Calu3 (cell line): ENCODE measurements at regions of chr12 and their contacts with region 1.

Region 1: DNA sequence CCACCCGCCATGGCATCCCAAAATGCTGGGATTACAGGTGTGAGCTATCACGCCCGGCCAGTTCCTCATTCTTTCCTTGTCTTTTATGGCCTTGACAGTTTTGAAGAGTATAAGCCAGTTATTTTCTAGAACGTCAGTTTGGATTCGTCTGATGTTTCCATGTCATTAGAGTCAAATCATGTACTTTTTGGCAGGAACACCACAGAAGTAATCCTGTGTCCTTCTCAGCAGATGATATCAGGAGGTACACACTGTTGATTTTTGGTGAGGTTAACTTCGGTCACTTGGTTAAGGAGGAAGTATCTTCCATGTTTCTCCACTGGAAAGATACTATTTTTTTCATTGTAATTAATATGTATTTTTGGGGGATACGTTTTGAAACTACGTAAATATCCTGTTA is 25.1 kb upstream of the VPS33A start:
- DNase-seq: no peak
- H3K4me3 Mint-ChIP-seq: no peak overlapping the region
- H3K27ac Mint-ChIP-seq: no peak overlapping the region
- H3K4me1 Mint-ChIP-seq: no peaks in the 10 kb centered on the region
- H3K27me3 Mint-ChIP-seq: no peaks in the 10 kb centered on the region
- CTCF ChIP-seq: no peak

Region 2: GRCh38 chr12:122031342-122032216 is 259.9 kb before region 1 on chr12:
- CTCF ChIA-PET with region 1: interaction called, 10 read pairs
- intact Hi-C with region 1: no loop called
- DNase-seq: peak; percentile 78
- H3K4me3 Mint-ChIP-seq: no peak overlapping the region
- H3K27ac Mint-ChIP-seq: peak overlapping the region; percentile 27
- H3K4me1 Mint-ChIP-seq: peaks cover 52% of the 10 kb centered on the region
- H3K27me3 Mint-ChIP-seq: no peaks in the 10 kb centered on the region
- CTCF ChIP-seq: peak; percentile 95

Region 3: DNA sequence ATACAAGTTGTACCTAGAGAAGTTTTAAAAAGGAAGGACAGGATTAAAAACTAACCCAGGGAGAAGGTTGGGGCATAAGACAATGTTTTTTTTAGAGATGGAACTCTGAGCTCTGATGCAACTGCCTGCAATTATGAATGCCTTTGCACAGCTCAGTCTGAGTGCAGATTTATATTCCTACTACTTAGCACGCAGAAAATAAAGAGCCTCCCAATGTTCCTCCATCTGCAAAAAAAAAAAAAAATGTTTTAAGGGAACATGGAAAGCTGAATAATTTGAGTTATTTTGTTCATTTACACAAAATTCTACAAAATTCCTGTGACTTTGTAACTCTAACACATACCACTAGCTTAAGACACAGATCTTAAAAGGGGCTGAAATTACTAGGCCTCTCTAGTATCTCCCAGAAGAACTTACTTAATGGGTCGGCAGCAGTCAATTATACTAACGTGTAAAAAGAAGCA is 115.3 kb after region 1 on chr12:
- CTCF ChIA-PET with region 1: interaction called, 16 read pairs
- intact Hi-C with region 1: no loop called
- DNase-seq: no peak
- H3K4me3 Mint-ChIP-seq: no peak overlapping the region
- H3K27ac Mint-ChIP-seq: peak overlapping the region; percentile 88
- H3K4me1 Mint-ChIP-seq: peaks cover 39% of the 10 kb centered on the region
- H3K27me3 Mint-ChIP-seq: no peaks in the 10 kb centered on the region
- CTCF ChIP-seq: no peak